GM12878 (cell line): ENCODE measurements at regions of chr2 and their contacts with region 1.

Region 1: GRCh38 chr2:119451336-119452050 is 19.8 kb downstream of the TMEM37 start:
- DNase-seq: no peak
- ATAC-seq: no peak
- H3K4me3 ChIP-seq: no peak overlapping the region
- H3K27ac ChIP-seq: no peak overlapping the region
- H3K4me1 ChIP-seq: no peaks in the 10 kb centered on the region
- H3K27me3 ChIP-seq: peaks cover 0 to 3% of the 10 kb centered on the region in 2 experiments; a peak in 3 of 4 replicates
- CTCF ChIP-seq: no peak
- EP300 ChIP-seq: no peak
- POLR2A ChIP-seq: no peak
- RAD21 ChIP-seq: no peak

Region 2: GRCh38 chr2:119461811-119462210 is 10.3 kb after region 1 on chr2:
- CTCF ChIA-PET with region 1: no interaction called
- POLR2A ChIA-PET with region 1: no interaction called
- RAD21 ChIA-PET with region 1: no interaction called
- SMC1A ChIA-PET with region 1: no interaction called
- in situ Hi-C with region 1: no loop called
- intact Hi-C with region 1: loop called (anchors 1 kb)
- DNase-seq: no peak
- ATAC-seq: no peak
- H3K4me3 ChIP-seq: no peak overlapping the region
- H3K27ac ChIP-seq: no peak overlapping the region
- H3K4me1 ChIP-seq: no peaks in the 10 kb centered on the region
- H3K27me3 ChIP-seq: no peaks in the 10 kb centered on the region
- CTCF ChIP-seq: no peak
- EP300 ChIP-seq: no peak
- POLR2A ChIP-seq: no peak
- RAD21 ChIP-seq: no peak